K562 (cell line): ENCODE measurements at regions of chr17 and their contacts with region 1.

Region 1: DNA sequence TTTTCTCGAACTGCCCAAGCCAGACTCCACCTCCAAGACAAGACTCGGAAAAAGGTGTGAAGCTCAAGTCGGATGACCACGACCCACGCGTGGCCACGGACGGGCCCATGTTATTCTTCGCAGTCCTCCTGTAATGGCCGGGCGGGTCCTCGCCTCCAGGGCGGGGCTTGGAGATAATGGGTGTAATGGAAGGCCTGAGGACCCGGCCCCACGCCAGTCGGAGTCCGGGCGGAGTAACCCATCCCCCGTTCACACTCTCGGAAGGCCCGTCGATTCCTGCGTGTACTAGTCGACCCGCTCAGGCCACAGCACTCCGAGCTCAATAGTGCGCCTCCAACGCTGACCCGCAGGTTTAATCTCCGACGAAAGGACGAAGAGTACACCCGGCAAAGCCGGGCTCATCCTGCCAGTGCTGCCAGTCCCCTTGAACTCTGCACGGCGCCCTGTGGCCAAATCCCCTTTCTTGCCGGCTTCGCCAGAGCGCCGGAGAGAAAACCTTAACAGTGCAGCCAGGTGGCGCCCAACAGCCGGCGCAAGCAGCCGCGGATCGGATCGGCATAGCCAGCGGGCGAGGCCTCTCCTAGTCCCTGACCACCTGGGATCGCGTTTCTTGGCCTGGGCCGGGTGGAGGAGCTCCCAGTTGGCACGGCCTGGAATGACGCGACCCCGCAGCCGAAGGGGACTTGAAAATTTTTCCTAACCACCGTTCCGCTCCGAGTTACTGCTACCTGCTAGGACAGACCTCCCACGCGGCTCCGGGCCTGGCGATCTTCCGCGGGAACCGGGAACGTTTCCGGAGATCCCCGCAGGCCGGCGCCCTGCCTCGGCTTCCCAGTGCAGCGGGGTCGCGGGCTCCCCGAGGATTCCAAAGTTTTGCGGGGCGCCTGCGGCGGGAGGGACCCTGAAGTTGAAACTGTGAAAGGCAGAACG is 762.0 kb downstream of the KCNJ18 start:
- DNase-seq: peak in 3 of 4 experiments; percentile 9 to 53 (median 22)
- ATAC-seq: peak; percentile 93
- H3K4me3 ChIP-seq: no peak overlapping the region
- H3K27ac ChIP-seq: no peak overlapping the region
- H3K4me1 ChIP-seq: peaks cover 0 to 10% of the 10 kb centered on the region in 2 experiments; a peak in 2 of 5 replicates
- H3K27me3 ChIP-seq: no peaks in the 10 kb centered on the region; a peak in 1 of 5 replicates
- CTCF ChIP-seq: peak; percentile 29 to 45 (median 35); a peak in 4 of 6 replicates
- EP300 ChIP-seq: no peak
- POLR2A ChIP-seq: no peak
- RAD21 ChIP-seq: peak in 1 of 2 experiments; percentile 57; a peak in 2 of 4 replicates

Region 2: GRCh38 chr17:22435231-22435974 is 18.9 kb before region 1 on chr17:
- CTCF ChIA-PET with region 1: no interaction called
- POLR2A ChIA-PET with region 1: no interaction called
- in situ Hi-C with region 1: no loop called
- intact Hi-C with region 1: no loop called
- DNase-seq: peak; percentile 86 to 95 (median 94)
- ATAC-seq: peak; percentile 100
- H3K4me3 ChIP-seq: peak overlapping the region; percentile 48
- H3K27ac ChIP-seq: no peak overlapping the region
- H3K4me1 ChIP-seq: peaks cover 0 to 7% of the 10 kb centered on the region in 2 experiments; a peak in 2 of 5 replicates
- H3K27me3 ChIP-seq: no peaks in the 10 kb centered on the region
- CTCF ChIP-seq: no peak
- EP300 ChIP-seq: no peak
- POLR2A ChIP-seq: no peak
- RAD21 ChIP-seq: no peak

Region 3: GRCh38 chr17:22517716-22518115 is 63.4 kb after region 1 on chr17:
- CTCF ChIA-PET with region 1: no interaction called
- POLR2A ChIA-PET with region 1: interaction called, 3 read pairs
- in situ Hi-C with region 1: no loop called
- intact Hi-C with region 1: loop called (anchors 5 kb)
- DNase-seq: peak; percentile 11 to 43 (median 14)
- ATAC-seq: no peak
- H3K4me3 ChIP-seq: no peak overlapping the region
- H3K27ac ChIP-seq: no peak overlapping the region
- H3K4me1 ChIP-seq: peaks cover 0 to 7% of the 10 kb centered on the region in 2 experiments; a peak in 3 of 5 replicates
- H3K27me3 ChIP-seq: no peaks in the 10 kb centered on the region
- CTCF ChIP-seq: peak; percentile 43 to 52 (median 45); a peak in 4 of 6 replicates
- EP300 ChIP-seq: no peak
- POLR2A ChIP-seq: no peak
- RAD21 ChIP-seq: peak in 1 of 2 experiments; percentile 50; a peak in 3 of 4 replicates